GM12878 (cell line): ENCODE measurements at regions of chr11 and their contacts with region 1.

Region 1: DNA sequence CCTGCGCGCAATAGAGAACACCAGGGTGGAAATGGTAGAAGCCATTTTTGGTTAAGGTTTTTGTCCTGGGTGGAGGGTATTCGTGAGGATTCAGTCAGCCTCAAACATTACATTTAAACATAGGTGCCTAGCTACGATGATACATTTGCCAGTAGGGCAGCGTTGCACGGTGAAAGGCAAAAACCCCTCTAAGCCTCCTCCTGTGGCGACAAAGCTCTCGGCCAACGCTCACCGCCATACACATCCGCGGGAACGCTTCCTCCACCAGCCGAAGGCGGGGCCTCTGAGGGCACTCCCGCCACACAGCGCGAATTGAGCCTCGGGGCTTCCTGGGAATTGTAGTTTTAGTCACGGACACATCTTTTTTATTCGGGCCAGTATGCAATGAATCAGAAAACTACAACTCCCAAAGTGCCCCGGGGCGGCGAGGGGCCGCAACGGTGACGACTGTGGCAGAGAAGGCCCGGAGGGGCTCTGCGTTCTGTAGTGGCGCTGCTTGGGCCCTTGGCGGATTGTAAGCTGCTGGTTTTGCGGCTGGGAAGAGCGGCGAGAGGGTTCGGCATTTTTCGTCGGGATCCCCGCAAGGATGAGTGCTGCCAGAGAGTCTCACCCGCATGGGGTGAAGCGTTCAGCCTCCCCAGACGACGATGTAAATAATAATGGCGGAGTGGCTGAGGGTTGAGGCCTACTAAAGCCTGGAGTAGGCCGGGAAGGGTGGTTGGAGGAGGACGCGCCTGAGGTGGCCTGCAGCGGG is at the start of gene C11orf58:
- DNase-seq: peak; percentile 88
- ATAC-seq: peak; percentile 96
- H3K4me3 ChIP-seq: peak within 1 kb of the TSS; percentile 85
- H3K27ac ChIP-seq: peak within 1 kb of the TSS; percentile 94
- H3K4me1 ChIP-seq: peaks cover 4% of the 10 kb centered on the region; the same call in 1 of the 2 replicates
- H3K27me3 ChIP-seq: no peaks in the 10 kb centered on the region
- CTCF ChIP-seq: no peak
- EP300 ChIP-seq: no peak
- POLR2A ChIP-seq: peak; percentile 98
- RAD21 ChIP-seq: no peak
- polyA plus RNA-seq, gene C11orf58: 373 to 379 TPM

Region 2: GRCh38 chr11:16690086-16690485 is 48.3 kb before region 1 on chr11:
- CTCF ChIA-PET with region 1: no interaction called
- POLR2A ChIA-PET with region 1: no interaction called
- RAD21 ChIA-PET with region 1: no interaction called
- SMC1A ChIA-PET with region 1: no interaction called
- in situ Hi-C with region 1: no loop called
- intact Hi-C with region 1: no loop called
- DNase-seq: no peak
- ATAC-seq: no peak
- H3K4me3 ChIP-seq: no peak overlapping the region
- H3K27ac ChIP-seq: no peak overlapping the region
- H3K4me1 ChIP-seq: no peaks in the 10 kb centered on the region
- H3K27me3 ChIP-seq: no peaks in the 10 kb centered on the region
- CTCF ChIP-seq: no peak
- EP300 ChIP-seq: no peak
- POLR2A ChIP-seq: no peak
- RAD21 ChIP-seq: no peak

Region 3: DNA sequence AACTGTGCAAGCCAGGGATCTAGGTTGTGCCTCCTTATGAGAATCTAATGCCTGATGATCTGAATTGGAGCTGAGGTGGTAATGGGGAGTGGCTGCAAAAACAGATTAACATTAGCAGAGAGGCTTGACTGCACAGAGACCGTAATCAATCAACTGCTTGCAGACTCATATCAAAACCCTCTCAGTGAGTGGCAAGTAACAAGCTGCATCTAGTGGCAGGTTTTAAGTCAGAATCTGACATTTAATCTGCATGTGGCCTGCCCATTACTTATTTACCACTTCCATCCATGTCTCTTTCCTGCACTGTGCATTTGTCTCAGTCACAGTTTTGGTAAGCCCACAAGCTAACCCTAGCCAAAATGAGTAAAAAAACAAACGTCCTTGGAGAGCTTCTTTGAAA is 11.3 kb after region 1 on chr11:
- CTCF ChIA-PET with region 1: interaction called, 12 read pairs
- POLR2A ChIA-PET with region 1: interaction called, 17 read pairs
- RAD21 ChIA-PET with region 1: interaction called, 4 read pairs
- SMC1A ChIA-PET with region 1: interaction called, 8 read pairs
- in situ Hi-C with region 1: no loop called
- intact Hi-C with region 1: no loop called
- DNase-seq: no peak
- ATAC-seq: peak; percentile 74
- H3K4me3 ChIP-seq: no peak overlapping the region
- H3K27ac ChIP-seq: no peak overlapping the region
- H3K4me1 ChIP-seq: no peaks in the 10 kb centered on the region
- H3K27me3 ChIP-seq: no peaks in the 10 kb centered on the region
- CTCF ChIP-seq: no peak
- EP300 ChIP-seq: no peak
- POLR2A ChIP-seq: no peak
- RAD21 ChIP-seq: no peak

Region 4: DNA sequence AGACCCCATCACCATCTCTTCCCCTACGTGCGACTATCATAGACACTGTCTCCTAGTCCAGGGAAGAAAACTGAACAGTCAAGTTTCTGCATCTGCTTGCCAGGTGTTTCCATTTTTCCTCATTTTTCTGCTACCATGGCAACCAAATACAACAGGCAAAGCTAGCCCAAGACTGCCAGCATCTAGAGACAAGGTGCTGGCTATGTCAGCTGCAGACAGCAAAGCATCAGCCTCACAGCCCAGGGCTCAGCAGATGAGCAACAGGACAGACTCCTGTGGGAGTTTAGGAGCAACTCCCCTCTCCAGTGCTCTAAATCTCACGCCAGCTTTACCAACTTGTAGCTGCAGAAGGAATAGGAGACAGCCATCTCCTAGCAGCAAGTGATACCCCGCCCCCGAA is 124.4 kb after region 1 on chr11:
- CTCF ChIA-PET with region 1: no interaction called
- POLR2A ChIA-PET with region 1: no interaction called
- RAD21 ChIA-PET with region 1: no interaction called
- SMC1A ChIA-PET with region 1: no interaction called
- in situ Hi-C with region 1: no loop called
- intact Hi-C with region 1: no loop called
- DNase-seq: no peak
- ATAC-seq: no peak
- H3K4me3 ChIP-seq: no peak overlapping the region
- H3K27ac ChIP-seq: no peak overlapping the region
- H3K4me1 ChIP-seq: no peaks in the 10 kb centered on the region
- H3K27me3 ChIP-seq: no peaks in the 10 kb centered on the region; a peak in 1 of 4 replicates
- CTCF ChIP-seq: no peak
- EP300 ChIP-seq: no peak
- POLR2A ChIP-seq: no peak
- RAD21 ChIP-seq: no peak

Region 5: GRCh38 chr11:17077520-17078401 is 339.4 kb after region 1 on chr11 and contains the start of gene RPS13:
- CTCF ChIA-PET with region 1: no interaction called
- POLR2A ChIA-PET with region 1: interaction called, 10 read pairs
- RAD21 ChIA-PET with region 1: no interaction called
- SMC1A ChIA-PET with region 1: interaction called, 3 read pairs
- in situ Hi-C with region 1: no loop called
- intact Hi-C with region 1: no loop called
- DNase-seq: peak; percentile 97
- ATAC-seq: peak; percentile 93
- H3K4me3 ChIP-seq: peak within 1 kb of the TSS; percentile 90
- H3K27ac ChIP-seq: peak within 1 kb of the TSS; percentile 95
- H3K4me1 ChIP-seq: no peaks in the 10 kb centered on the region; the same call in 1 of the 2 replicates
- H3K27me3 ChIP-seq: no peaks in the 10 kb centered on the region
- CTCF ChIP-seq: no peak
- EP300 ChIP-seq: no peak
- POLR2A ChIP-seq: peak; percentile 100
- RAD21 ChIP-seq: no peak
- polyA plus RNA-seq, gene RPS13: 4,150 to 4,753 TPM